ENCODE measurements at regions of chr19 and their contacts with region 1.

Region 1: GRCh38 chr19:10565567-10566407 is at the start of gene KRI1:
- DNase-seq: peak; percentile 99
- ATAC-seq: peak; percentile 86 to 91 (median 86)
- H3K4me3 ChIP-seq: peak within 1 kb of the TSS; percentile 64 to 94 (median 86)
- H3K27ac ChIP-seq: peak within 1 kb of the TSS; percentile 68 to 91 (median 85)
- H3K4me1 ChIP-seq: peaks cover 8 to 46% (median 33%) of the 10 kb centered on the region in 12 donors
- H3K27me3 ChIP-seq: no peaks in the 10 kb centered on the region
- CTCF ChIP-seq: peak in 6 of 12 donors; percentile 15 to 43 (median 32)
- POLR2A ChIP-seq: peak in 1 of 2 donors; percentile 96
- total RNA-seq, gene KRI1: 6.7 to 13.0 (median 10.4) TPM

Region 2: DNA sequence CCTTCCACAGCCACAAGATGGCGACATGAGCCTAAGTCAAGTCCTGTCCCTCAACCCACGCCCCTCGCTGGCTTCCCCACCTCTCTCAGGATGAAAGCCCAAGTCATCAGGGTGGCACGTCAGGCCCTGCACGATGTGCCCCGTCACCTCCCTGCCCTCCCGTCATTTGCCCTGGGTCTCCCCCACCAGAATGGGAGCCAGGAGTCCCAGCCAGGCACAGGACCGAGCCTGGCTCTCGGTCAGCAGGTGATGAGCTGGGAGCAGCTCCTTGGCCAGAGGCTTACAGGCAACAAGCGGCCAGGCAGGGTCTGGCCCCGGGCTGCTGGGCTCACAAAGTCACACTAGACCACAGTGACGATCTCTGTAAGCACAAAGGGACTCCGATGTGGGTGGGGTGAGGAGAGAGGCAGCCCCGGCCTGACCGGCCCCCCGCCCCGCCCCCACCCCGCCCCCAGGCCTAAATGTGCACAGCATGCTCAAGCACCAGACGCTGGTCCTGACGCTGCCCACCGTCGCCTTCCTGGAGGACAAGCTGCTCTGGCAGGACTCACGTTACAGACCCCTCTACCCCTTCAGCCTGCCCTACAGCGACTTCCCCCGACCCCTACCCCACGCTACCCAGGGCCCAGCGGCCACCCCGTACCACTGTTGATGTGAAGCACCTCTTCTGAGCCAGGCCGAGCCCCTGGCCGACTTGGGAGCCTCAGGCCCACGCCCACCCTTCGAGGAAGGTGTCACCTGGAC is 306.5 kb before region 1 on chr19:
- intact Hi-C with region 1: no loop called
- DNase-seq: peak; percentile 84 to 91 (median 88)
- ATAC-seq: peak in 3 of 4 donors; percentile 51 to 70 (median 54)
- H3K4me3 ChIP-seq: no peak overlapping the region
- H3K27ac ChIP-seq: peak overlapping the region in 3 of 12 donors; percentile 19 to 39 (median 37)
- H3K4me1 ChIP-seq: peaks cover 0 to 11% (median 6%) of the 10 kb centered on the region in 12 donors
- H3K27me3 ChIP-seq: no peaks in the 10 kb centered on the region
- CTCF ChIP-seq: peak; percentile 55 to 79 (median 73)
- POLR2A ChIP-seq: no peak

Region 3: DNA sequence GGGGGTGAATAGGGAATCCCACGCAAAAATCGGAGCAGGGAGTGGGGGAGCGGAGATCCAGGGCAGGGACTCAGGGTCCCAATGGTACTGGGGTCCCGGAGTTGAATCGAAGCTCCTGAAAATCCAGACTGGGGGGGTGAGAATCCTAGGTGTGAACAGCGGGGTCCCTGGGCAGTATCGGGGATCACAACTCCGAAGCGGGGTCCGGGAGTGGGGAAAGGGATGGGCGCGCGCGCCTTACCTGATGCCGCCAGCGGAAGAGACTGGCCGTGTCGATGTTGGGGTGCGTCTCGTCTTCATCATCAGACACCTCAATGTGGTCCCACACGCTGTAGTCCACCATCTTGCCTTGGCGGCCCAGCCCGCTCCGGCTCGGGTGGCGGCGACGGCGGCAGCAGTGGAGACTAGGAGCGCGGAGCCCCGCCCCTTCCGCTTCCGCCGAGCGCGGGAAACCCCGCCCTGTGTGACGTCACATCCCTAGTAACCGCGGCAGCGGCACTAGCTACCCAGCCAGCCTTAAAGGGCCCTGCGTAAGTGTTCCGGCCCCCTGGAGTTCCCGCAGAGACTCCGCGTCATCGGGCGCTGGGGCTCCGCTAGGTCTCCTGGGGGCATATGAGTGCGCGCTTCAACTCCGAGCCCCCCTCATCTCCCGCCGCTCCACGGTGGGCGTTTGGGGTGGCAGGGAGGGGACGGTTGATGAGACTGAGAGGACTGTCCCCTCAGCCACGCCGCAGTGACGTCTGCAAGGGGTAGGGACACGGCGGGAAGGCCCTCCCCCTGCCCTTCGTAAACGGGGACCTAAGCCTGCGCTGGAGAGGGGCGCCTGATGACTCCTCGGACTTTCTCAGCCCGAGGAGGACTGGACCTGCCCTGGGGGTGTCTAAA is 162.4 kb before region 1 on chr19 and contains the start of gene CDC37:
- intact Hi-C with region 1: loop called in 6 of 10 experiments (anchors 5 to 10 kb)
- DNase-seq: peak; percentile 96 to 98 (median 97)
- ATAC-seq: peak; percentile 92 to 94 (median 93)
- H3K4me3 ChIP-seq: peak within 1 kb of the TSS; percentile 58 to 98 (median 92)
- H3K27ac ChIP-seq: peak within 1 kb of the TSS; percentile 68 to 95 (median 86)
- H3K4me1 ChIP-seq: peaks cover 12 to 83% (median 51%) of the 10 kb centered on the region in 12 donors
- H3K27me3 ChIP-seq: peaks cover 4 to 27% (median 11%) of the 10 kb centered on the region in 9 donors
- CTCF ChIP-seq: no peak
- POLR2A ChIP-seq: peak in 1 of 2 donors; percentile 89
- total RNA-seq, gene CDC37: 108 to 189 (median 138) TPM

Region 4: GRCh38 chr19:10416380-10417257 is 149.2 kb before region 1 on chr19:
- intact Hi-C with region 1: loop called in 2 of 10 experiments (anchors 5 to 10 kb)
- DNase-seq: peak; percentile 77 to 92 (median 83)
- ATAC-seq: peak; percentile 62 to 88 (median 84)
- H3K4me3 ChIP-seq: peak overlapping the region; percentile 21 to 67 (median 52)
- H3K27ac ChIP-seq: peak overlapping the region in 6 of 12 donors; percentile 12 to 65 (median 44)
- H3K4me1 ChIP-seq: peaks cover 0 to 56% (median 35%) of the 10 kb centered on the region in 12 donors
- H3K27me3 ChIP-seq: peaks cover 32 to 57% (median 50%) of the 10 kb centered on the region in 9 donors
- CTCF ChIP-seq: peak; percentile 70 to 97 (median 86)
- POLR2A ChIP-seq: no peak

Region 5: DNA sequence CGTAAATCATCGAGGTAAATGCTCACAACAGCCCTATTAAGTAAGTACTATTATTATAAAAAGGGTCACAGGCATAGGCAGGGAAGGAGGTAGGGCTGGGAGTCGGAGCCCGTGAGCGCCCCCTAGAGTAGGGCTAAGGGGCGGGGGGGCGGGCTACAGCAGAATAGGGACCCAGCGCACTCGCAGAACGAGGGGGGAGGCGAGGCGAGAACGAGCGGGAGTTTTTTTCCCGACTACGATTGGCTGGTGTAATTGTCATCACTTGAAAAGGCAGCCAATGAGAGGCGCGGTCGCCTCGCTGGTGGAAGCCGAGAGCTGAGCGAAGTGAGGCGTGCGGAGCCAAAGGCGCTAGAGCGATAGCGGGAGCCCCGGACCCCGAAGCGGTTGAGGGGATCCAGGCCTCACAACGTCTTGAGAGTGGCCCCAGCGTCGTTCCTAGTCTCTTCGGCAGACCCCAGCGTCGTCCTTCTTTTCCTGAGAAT is 86.8 kb before region 1 on chr19:
- intact Hi-C with region 1: loop called in 1 of 10 experiments (anchors 5 kb)
- DNase-seq: peak; percentile 92 to 94 (median 94)
- ATAC-seq: peak; percentile 93 to 98 (median 98)
- H3K4me3 ChIP-seq: peak overlapping the region in 11 of 12 donors; percentile 33 to 64 (median 53)
- H3K27ac ChIP-seq: peak overlapping the region in 6 of 12 donors; percentile 11 to 47 (median 40)
- H3K4me1 ChIP-seq: peaks cover 0 to 19% (median 8%) of the 10 kb centered on the region in 12 donors
- H3K27me3 ChIP-seq: no peaks in the 10 kb centered on the region
- CTCF ChIP-seq: peak; percentile 78 to 91 (median 88)
- POLR2A ChIP-seq: peak in 1 of 2 donors; percentile 44

Region 6: GRCh38 chr19:10502524-10503001 is 63.2 kb before region 1 on chr19:
- intact Hi-C with region 1: loop called in 5 of 10 experiments (anchors 2 to 10 kb)
- DNase-seq: peak; percentile 95 to 97 (median 97)
- ATAC-seq: peak; percentile 93 to 97 (median 95)
- H3K4me3 ChIP-seq: peak overlapping the region; percentile 72 to 99 (median 95)
- H3K27ac ChIP-seq: peak overlapping the region; percentile 96 to 100 (median 99)
- H3K4me1 ChIP-seq: peaks cover 0 to 47% (median 34%) of the 10 kb centered on the region in 12 donors
- H3K27me3 ChIP-seq: no peaks in the 10 kb centered on the region
- CTCF ChIP-seq: peak in 3 of 12 donors; percentile 8 to 25 (median 17)
- POLR2A ChIP-seq: peak in 1 of 2 donors; percentile 60

Region 7: DNA sequence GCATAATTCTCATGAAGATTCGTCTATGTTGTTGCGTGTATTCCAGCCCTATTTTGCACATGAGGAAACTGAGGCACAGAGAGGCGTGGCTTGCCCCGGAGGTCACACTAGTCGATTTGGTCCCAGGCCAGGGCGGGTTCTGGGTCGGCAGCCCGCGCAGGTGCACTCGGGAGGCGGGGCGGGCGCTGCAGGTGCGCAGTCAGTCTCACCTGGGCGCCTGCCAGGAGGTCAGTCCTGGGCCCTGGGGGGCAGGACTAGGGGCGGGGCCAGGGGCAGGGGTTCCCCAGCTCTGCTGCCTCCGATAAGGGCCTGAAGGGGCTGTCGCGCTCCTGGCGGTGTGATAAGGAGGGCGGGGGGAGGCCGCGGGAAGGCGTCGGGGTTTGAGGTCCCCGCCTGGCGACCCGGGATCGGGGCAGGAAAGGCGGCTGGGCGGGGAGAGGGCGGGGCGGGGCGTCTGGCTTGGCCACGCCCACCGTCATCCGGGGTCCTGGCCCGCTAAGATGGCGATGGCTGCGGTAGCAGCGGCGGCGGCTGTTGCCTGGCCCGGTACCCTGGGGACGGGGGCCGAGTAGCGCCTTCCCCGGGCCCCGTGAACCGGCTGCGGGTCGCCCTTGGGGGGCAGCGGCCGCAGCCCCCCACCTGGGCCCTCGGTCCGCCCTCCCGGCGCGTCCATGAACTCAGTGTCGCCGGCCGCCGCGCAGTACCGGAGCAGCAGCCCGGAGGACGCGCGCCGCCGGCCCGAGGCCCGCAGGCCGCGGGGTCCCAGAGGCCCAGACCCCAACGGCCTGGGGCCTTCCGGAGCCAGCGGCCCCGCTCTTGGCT is 22.2 kb before region 1 on chr19 and contains the start of gene ATG4D:
- intact Hi-C with region 1: loop called in 3 of 10 experiments (anchors 2 kb)
- DNase-seq: peak; percentile 75 to 91 (median 84)
- ATAC-seq: peak; percentile 52 to 91 (median 88)
- H3K4me3 ChIP-seq: peak within 1 kb of the TSS; percentile 71 to 100 (median 95)
- H3K27ac ChIP-seq: peak within 1 kb of the TSS; percentile 76 to 99 (median 92)
- H3K4me1 ChIP-seq: peaks cover 0 to 29% (median 17%) of the 10 kb centered on the region in 12 donors
- H3K27me3 ChIP-seq: no peaks in the 10 kb centered on the region
- CTCF ChIP-seq: no peak
- POLR2A ChIP-seq: peak in 1 of 2 donors; percentile 78
- total RNA-seq, gene ATG4D: 47.3 to 76.1 (median 55.3) TPM

Region 8: GRCh38 chr19:10653715-10654492 is 88.1 kb after region 1 on chr19 and contains the start of gene ILF3:
- intact Hi-C with region 1: loop called in 1 of 10 experiments (anchors 5 kb)
- DNase-seq: peak; percentile 99 to 100 (median 100)
- ATAC-seq: peak; percentile 90 to 95 (median 93)
- H3K4me3 ChIP-seq: peak within 1 kb of the TSS; percentile 75 to 100 (median 94)
- H3K27ac ChIP-seq: peak within 1 kb of the TSS; percentile 86 to 99 (median 98)
- H3K4me1 ChIP-seq: peaks cover 0 to 50% (median 36%) of the 10 kb centered on the region in 12 donors
- H3K27me3 ChIP-seq: no peaks in the 10 kb centered on the region
- CTCF ChIP-seq: no peak
- POLR2A ChIP-seq: peak in 1 of 2 donors; percentile 82
- total RNA-seq, gene ILF3: 45.7 to 140 (median 118) TPM